Prostate gland (tissue), 2 donors: ENCODE measurements at regions of chr4 and their contacts with region 1.

Region 1: DNA sequence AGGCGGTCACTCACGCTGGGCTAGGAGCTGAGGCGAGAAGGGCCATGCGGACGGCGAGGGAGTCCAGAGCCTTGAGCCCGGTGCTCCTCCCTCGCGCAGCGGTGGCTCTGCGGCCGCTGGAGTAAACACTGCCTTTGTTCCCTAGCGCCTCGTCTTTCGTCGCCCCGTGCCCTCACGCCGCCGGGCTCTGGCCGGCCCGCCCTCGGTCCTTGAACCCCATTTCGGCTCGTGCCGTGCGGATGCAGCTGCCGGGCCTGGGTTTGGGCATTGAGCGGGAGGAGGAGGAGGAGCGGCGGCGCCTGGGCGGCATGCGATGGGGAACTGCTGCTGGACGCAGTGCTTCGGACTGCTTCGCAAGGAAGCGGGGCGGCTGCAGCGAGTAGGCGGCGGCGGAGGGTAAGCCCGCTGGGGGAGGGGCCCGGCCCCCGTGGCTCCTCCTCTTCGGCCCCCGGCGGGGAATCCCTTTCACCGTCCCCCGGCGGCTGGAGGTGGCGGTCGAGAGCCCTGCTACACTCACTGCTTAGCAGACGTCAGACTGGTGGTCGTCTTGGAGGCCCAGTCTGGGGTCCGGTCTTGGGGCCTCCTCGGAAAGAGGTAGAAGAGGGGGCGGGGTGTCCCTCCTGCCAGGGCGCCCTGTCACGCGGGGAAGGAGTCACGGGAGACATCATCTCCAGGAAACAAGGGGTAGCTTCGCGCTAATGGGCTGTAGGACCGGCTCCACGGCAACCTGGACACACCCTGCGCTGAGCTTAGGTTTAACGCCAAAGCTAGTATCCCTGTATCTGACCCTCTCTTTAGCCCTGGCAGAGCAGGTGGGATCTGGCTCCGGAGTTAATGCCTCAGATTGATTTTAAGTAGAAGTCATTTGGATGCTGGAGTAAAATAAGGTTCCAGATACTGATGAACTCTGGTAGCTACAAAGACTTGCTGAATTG is at the start of gene AP1AR:
- DNase-seq: peak; percentile 70
- H3K4me3 ChIP-seq: peak within 1 kb of the TSS; percentile 72 to 83
- H3K27ac ChIP-seq: peak within 1 kb of the TSS; percentile 92 to 95
- H3K4me1 ChIP-seq: no peaks in the 10 kb centered on the region
- H3K27me3 ChIP-seq: no peaks in the 10 kb centered on the region
- CTCF ChIP-seq: peak in 1 of 4 experiments; percentile 39
- POLR2A ChIP-seq: peak; percentile 88
- total RNA-seq, gene AP1AR: 15.3 to 24.3 TPM

Region 2: DNA sequence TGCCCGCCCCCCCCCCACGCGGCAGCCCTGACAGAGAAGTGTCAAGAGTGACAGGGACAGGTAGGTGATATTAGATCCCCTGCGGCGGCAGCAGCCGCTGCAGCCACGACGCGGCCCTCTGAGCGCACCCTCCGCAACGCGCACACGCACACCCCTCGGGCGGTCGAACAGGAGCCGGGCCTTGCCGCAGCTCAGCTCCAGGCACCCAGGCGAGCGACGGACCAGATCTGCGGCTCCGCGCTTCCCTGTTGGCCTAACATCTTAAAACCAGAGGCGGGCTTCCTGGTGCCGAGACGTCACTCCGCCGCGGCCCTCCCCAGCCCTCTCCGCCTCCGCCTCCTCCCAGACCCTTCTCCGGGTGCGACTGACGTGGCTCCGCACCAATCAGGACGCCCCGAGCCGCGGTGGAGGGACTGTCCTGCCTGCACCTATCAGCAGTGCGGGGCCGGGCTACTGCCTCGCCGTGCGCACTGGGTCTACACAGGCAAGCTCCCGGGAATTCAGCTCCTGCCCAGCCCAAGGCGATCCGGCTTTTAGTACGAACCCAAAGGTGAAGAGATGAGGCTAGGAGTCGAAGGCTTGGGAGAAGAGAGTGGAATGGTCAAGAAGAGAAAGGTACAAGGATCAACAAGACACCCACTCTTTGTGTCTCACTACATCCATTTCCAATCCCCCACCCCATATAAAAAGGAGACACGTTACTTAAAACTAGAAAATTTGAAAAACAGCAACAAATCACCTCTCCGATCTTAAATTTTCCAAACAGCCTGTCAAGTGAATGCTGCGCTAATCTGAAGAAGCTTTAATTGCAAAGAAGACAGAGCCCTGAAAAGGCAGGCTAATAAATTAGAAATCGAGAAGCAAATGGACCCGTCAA is 1609.0 kb before region 1 on chr4 and contains the start of gene PITX2:
- intact Hi-C with region 1: loop called (anchors 5 kb)
- DNase-seq: peak; percentile 45
- H3K4me3 ChIP-seq: peak within 1 kb of the TSS; percentile 6 to 35
- H3K27ac ChIP-seq: no peak within 1 kb of the TSS
- H3K4me1 ChIP-seq: peaks cover 3% of the 10 kb centered on the region
- H3K27me3 ChIP-seq: peaks cover 57% of the 10 kb centered on the region
- CTCF ChIP-seq: no peak
- POLR2A ChIP-seq: peak; percentile 35
- total RNA-seq, gene PITX2: 2.0 to 2.3 TPM

Region 3: DNA sequence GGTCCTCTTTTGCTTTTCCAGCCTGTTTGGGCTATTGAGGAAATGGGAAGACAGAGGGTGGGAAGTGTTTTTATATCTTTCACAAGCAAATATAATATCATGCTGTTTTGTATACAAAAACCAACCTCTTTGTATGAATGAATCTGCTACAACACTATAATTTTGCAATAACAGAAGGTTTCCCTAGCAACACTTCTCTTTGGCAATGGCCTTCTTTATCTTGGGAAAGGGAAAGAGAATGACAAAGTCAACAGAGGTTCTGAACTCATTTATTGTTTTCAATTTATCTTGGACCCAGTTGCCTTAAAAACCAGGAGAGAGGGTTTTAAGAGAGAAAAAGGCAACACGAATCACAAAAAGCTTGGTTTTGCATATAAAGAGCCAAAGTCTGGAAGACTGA is 208.6 kb before region 1 on chr4:
- intact Hi-C with region 1: no loop called
- DNase-seq: no peak
- H3K4me3 ChIP-seq: no peak overlapping the region
- H3K27ac ChIP-seq: no peak overlapping the region
- H3K4me1 ChIP-seq: no peaks in the 10 kb centered on the region
- H3K27me3 ChIP-seq: no peaks in the 10 kb centered on the region
- CTCF ChIP-seq: no peak
- POLR2A ChIP-seq: no peak

Region 4: DNA sequence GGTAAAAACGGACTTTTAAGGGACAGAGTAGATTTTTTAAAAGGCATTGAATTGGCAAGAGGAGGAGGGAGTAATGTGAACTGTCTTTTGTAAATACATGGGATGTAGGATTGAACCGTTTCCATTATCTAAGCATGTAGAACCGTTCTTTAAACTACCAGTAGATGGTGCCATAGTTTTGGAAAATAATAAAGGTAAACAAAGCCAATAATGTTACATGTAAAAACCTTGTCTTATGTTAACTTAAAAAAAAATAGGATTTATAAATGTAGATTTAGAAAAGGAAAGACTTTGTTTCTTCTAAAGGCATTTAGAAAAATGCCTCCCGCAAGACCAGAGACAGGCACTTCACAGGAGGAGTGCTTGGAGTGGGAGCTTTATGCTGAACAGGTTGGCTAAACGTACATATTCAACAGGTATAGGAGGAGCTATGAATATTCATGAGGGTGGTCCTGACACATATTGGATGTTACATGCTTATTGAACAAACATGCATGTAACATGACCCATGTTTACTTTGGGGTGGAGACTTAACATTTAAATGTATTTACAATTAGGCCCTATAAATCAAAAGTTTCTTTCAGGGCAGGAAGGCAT is 132.2 kb before region 1 on chr4:
- intact Hi-C with region 1: loop called (anchors 2 kb)
- DNase-seq: no peak
- H3K4me3 ChIP-seq: no peak overlapping the region
- H3K27ac ChIP-seq: no peak overlapping the region
- H3K4me1 ChIP-seq: no peaks in the 10 kb centered on the region
- H3K27me3 ChIP-seq: no peaks in the 10 kb centered on the region
- CTCF ChIP-seq: peak in 3 of 4 experiments; percentile 65 to 84 (median 76)
- POLR2A ChIP-seq: no peak

Region 5: DNA sequence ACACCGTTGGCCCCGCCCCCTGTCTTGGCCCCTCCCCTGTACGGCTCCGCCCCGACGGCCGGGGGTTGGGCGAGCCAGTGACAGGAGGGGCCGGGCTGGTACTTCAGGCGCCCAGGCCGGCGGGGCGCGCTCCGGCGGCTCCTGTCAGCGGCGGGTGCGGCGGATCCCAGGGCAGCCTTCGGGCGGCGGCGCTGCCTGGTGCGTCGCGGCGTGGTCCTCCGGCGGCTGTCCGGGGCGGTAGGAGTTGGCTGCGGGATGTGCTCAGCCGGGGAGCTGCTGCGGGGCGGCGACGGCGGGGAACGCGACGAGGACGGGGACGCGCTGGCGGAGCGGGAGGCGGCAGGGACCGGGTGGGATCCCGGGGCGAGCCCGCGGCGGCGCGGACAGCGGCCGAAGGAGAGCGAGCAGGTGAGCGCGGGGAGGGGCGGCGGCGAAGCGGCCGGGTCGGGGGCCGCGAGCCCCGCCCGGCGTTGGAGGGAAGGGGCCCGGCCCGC is 86.7 kb before region 1 on chr4 and contains the start of gene FAM241A:
- intact Hi-C with region 1: loop called (anchors 2 kb)
- DNase-seq: peak; percentile 84
- H3K4me3 ChIP-seq: peak within 1 kb of the TSS; percentile 79 to 85
- H3K27ac ChIP-seq: peak within 1 kb of the TSS; percentile 82 to 91
- H3K4me1 ChIP-seq: no peaks in the 10 kb centered on the region
- H3K27me3 ChIP-seq: no peaks in the 10 kb centered on the region
- CTCF ChIP-seq: peak in 1 of 4 experiments; percentile 18
- POLR2A ChIP-seq: peak; percentile 87
- total RNA-seq, gene FAM241A: 3.6 to 3.7 TPM

Region 6: DNA sequence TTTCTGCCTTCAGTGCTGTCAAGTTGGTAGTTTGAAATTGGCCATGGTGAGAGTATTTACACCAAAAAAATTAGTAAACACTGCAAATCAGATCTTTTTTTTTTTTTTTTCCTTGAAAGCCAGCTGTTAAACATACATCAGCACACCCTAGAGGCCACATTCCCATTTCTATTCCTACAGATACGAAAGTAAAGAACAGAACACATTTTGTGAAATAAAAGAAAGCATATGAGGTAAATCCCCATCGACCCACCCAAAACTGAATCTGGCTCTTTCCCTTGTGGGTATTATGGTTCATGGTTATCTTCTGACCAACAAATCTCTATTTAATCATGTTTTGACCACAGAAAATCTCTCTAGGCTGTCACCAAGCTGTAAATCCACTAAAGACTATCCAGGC is 42.3 kb before region 1 on chr4:
- intact Hi-C with region 1: no loop called
- DNase-seq: no peak
- H3K4me3 ChIP-seq: no peak overlapping the region
- H3K27ac ChIP-seq: no peak overlapping the region
- H3K4me1 ChIP-seq: no peaks in the 10 kb centered on the region
- H3K27me3 ChIP-seq: no peaks in the 10 kb centered on the region
- CTCF ChIP-seq: no peak
- POLR2A ChIP-seq: no peak

Region 7: DNA sequence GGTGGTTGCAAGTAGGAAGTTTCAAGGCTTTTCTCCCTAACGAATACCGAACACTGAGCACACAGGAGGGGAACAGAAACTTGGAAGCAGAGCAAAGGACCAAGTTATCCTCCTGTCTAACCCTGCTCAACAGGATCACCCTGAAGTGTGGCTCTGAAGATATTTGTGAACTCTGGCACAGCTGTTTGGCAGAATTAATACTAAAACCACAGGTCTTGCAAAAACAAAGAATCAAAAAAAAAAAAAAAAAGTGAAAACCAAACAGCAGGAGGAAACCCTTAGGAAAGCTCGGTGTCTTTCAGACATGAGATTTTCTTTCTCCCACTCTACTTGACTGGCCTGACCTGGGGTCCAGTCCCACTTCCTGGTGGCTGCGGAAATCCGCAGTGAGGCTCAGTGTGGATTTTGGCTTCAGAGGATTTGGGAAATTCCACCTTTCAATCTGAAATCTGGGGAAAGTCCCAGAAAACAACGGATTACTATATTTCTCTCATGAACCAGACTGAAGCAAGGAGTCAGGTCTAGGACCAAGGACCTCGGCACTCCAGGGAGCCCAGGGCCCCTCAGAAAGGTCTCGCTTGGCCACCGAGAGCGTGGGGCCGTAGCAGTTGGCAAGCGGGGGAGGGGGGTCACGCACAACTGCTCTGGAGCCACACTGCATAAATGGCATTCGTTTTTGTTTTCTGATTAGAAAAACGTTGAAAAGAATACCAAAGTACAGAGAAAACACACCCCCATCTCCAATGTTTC is 52.8 kb after region 1 on chr4:
- intact Hi-C with region 1: loop called (anchors 5 kb)
- DNase-seq: peak; percentile 72
- H3K4me3 ChIP-seq: peak overlapping the region; percentile 74 to 80
- H3K27ac ChIP-seq: peak overlapping the region; percentile 76 to 90
- H3K4me1 ChIP-seq: no peaks in the 10 kb centered on the region
- H3K27me3 ChIP-seq: no peaks in the 10 kb centered on the region
- CTCF ChIP-seq: no peak
- POLR2A ChIP-seq: no peak

Region 8: GRCh38 chr4:112636688-112637551 is 404.9 kb after region 1 on chr4 and contains the starts of genes LARP7 and ZGRF1:
- intact Hi-C with region 1: loop called (anchors 5 kb)
- DNase-seq: peak; percentile 99
- H3K4me3 ChIP-seq: peak within 1 kb of the TSS; percentile 43 to 72
- H3K27ac ChIP-seq: peak within 1 kb of the TSS; percentile 94 to 98
- H3K4me1 ChIP-seq: peaks cover 7% of the 10 kb centered on the region
- H3K27me3 ChIP-seq: no peaks in the 10 kb centered on the region
- CTCF ChIP-seq: peak; percentile 91 to 99 (median 97)
- POLR2A ChIP-seq: peak; percentile 15
- total RNA-seq, gene LARP7: 26.6 to 35.4 TPM
- total RNA-seq, gene ZGRF1: 2.9 to 8.9 TPM